ENCODE measurements at regions of chrX and their contacts with region 1.

Region 1: GRCh38 chrX:39361736-39362135 is 560.5 kb downstream of the MID1IP1 start:
- DNase-seq: no peak
- H3K4me3 ChIP-seq: no peak overlapping the region
- H3K27ac ChIP-seq: no peak overlapping the region
- H3K4me1 ChIP-seq: no peaks in the 10 kb centered on the region
- H3K27me3 ChIP-seq: no peaks in the 10 kb centered on the region
- CTCF ChIP-seq: no peak

Region 2: DNA sequence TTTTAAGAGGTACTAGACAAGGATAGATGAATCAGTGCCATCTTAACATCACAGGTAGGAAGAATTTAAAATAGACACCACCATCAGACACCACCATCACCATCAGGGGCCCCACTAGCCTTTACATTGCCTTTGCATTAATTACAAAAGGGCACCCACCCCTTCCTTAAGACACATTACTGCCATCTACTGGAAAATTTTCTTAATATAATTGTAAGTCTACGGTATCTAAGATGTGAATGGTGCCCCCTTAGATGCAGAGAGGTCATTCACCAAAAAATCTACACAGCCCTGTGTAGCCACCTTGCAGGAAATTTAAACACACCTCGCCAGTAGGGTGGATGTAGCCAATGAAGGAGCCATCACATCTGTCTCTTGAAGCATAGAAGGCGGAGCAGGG is 376.4 kb before region 1 on chrX:
- intact Hi-C with region 1: no loop called
- DNase-seq: no peak
- H3K4me3 ChIP-seq: no peak overlapping the region
- H3K27ac ChIP-seq: no peak overlapping the region
- H3K4me1 ChIP-seq: no peaks in the 10 kb centered on the region
- H3K27me3 ChIP-seq: no peaks in the 10 kb centered on the region
- CTCF ChIP-seq: peak; percentile 16 to 24

Region 3: GRCh38 chrX:39336671-39337311 is 24.9 kb before region 1 on chrX:
- intact Hi-C with region 1: no loop called
- DNase-seq: peak in 1 of 2 donors; percentile 48
- H3K4me3 ChIP-seq: no peak overlapping the region
- H3K27ac ChIP-seq: peak overlapping the region; percentile 49 to 61
- H3K4me1 ChIP-seq: peaks cover 0 to 47% (median 5%) of the 10 kb centered on the region in 4 donors
- H3K27me3 ChIP-seq: no peaks in the 10 kb centered on the region
- CTCF ChIP-seq: no peak

Region 4: GRCh38 chrX:39402158-39402557 is 40.4 kb after region 1 on chrX:
- intact Hi-C with region 1: loop called (anchors 1 kb)
- DNase-seq: no peak
- H3K4me3 ChIP-seq: no peak overlapping the region
- H3K27ac ChIP-seq: no peak overlapping the region
- H3K4me1 ChIP-seq: peaks cover 0 to 14% (median 0%) of the 10 kb centered on the region in 4 donors
- H3K27me3 ChIP-seq: no peaks in the 10 kb centered on the region
- CTCF ChIP-seq: no peak

Measured in tibial artery (tissue), 4 donors.